PC-3 (cell line): ENCODE measurements at regions of chr10 and their contacts with region 1.

Region 1: GRCh38 chr10:77881636-77882035 is 44.9 kb downstream of the DLG5 start:
- DNase-seq: no peak
- ATAC-seq: no peak
- H3K4me3 ChIP-seq: no peak overlapping the region
- H3K27ac ChIP-seq: no peak overlapping the region
- H3K4me1 ChIP-seq: no peaks in the 10 kb centered on the region
- H3K27me3 ChIP-seq: no peaks in the 10 kb centered on the region
- CTCF ChIP-seq: no peak

Region 2: GRCh38 chr10:77737608-77738007 is 144.0 kb before region 1 on chr10:
- CTCF ChIA-PET with region 1: no interaction called
- POLR2A ChIA-PET with region 1: no interaction called
- intact Hi-C with region 1: no loop called
- DNase-seq: peak; percentile 99
- ATAC-seq: peak; percentile 91
- H3K4me3 ChIP-seq: no peak overlapping the region
- H3K27ac ChIP-seq: peak overlapping the region; percentile 34
- H3K4me1 ChIP-seq: peaks cover 13% of the 10 kb centered on the region
- H3K27me3 ChIP-seq: no peaks in the 10 kb centered on the region
- CTCF ChIP-seq: no peak

Region 3: DNA sequence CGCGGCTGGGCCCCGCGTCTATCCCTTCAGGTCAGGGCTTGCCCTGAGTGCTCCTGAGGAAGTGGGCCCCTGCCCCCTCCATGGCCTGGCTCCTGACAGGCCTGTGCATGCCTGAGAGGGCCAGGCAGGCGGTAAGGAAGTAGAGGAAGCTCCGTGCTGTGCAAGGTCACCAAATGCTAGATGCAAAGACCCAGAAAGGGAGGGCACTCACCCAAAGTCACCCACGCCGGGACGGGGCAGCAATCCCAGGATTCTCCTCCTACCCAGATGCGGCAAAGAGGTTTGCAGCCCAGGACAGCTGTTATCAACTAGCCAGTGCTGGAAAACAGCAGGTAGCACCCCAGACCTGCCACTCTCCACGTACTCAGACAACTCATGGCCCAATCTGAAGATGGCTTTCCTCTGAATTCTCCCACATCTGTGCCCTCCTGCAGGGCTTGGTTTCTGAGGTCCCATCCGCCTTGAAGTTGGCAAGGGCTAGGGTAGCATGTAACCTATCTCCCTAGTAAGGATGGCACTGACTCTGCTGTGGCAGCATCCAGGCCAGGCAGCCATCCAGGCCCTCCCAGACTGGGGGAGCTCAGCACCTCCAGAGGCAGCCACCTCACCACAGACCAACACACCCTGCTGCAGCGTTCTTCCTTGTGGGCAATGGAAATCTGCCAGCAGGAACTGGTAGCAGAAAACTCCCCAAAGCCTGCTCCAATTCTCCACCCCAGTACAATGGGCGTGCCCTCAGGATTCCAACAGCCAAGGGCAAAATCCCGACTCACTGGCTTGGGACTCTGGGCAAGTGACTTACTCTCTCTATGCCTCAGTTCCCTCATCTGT is 17.2 kb after region 1 on chr10:
- CTCF ChIA-PET with region 1: no interaction called
- POLR2A ChIA-PET with region 1: no interaction called
- intact Hi-C with region 1: loop called (anchors 2 kb)
- DNase-seq: peak; percentile 99
- ATAC-seq: peak; percentile 93
- H3K4me3 ChIP-seq: no peak overlapping the region
- H3K27ac ChIP-seq: peak overlapping the region; percentile 4
- H3K4me1 ChIP-seq: peaks cover 19% of the 10 kb centered on the region
- H3K27me3 ChIP-seq: no peaks in the 10 kb centered on the region
- CTCF ChIP-seq: no peak